ENCODE measurements at regions of chr7 and their contacts with region 1.

Region 1: GRCh38 chr7:134943764-134944400 is 42.4 kb upstream of the AGBL3 start:
- DNase-seq: peak; percentile 19
- ATAC-seq: peak; percentile 93
- H3K4me3 ChIP-seq: no peak overlapping the region
- H3K27ac ChIP-seq: no peak overlapping the region
- H3K4me1 ChIP-seq: no peaks in the 10 kb centered on the region
- H3K27me3 ChIP-seq: no peaks in the 10 kb centered on the region
- CTCF ChIP-seq: peak; percentile 40 to 78 (median 62); a peak in 5 of 6 replicates
- POLR2A ChIP-seq: no peak
- RAD21 ChIP-seq: peak; percentile 83

Region 2: DNA sequence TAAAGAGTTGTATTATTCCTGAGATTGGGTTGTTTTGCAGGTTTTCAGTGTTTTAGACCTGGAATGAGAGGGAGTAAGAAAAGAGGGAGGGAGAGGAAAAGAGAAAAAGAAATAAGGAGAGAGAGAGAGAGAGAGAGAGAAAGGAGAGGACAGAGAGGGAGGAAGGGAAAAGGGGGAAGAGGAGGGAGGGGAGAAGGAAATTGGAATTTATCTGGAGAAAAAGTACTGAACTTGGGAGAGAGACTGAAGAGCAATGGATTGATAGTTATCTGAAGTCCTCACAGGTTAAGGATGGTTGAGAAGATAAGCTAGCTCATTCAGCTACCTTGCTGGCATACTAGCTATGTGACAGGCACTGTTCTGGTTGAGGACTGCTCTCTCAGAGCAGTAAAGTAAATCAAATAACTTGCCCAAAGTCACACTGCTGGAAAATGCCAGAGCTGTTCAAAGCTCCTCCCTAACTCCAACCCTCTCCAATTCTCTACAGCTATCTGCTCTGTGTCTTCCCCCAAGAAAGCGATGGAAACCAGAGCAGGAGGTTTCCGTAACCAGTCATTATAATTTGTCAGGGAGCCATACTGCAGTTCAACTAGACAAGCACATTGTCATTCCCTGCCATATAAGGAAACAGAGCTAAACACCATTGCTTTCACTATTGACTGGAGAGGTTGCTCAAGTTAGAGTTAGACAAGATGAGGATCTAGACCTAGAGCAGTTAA is 153.8 kb before region 1 on chr7:
- CTCF ChIA-PET with region 1: no interaction called
- POLR2A ChIA-PET with region 1: no interaction called
- RAD21 ChIA-PET with region 1: no interaction called
- intact Hi-C with region 1: no loop called
- DNase-seq: no peak
- ATAC-seq: no peak
- H3K4me3 ChIP-seq: no peak overlapping the region
- H3K27ac ChIP-seq: no peak overlapping the region
- H3K4me1 ChIP-seq: no peaks in the 10 kb centered on the region
- H3K27me3 ChIP-seq: no peaks in the 10 kb centered on the region
- CTCF ChIP-seq: no peak
- POLR2A ChIP-seq: no peak
- RAD21 ChIP-seq: no peak

Region 3: GRCh38 chr7:134875867-134876266 is 68.0 kb before region 1 on chr7:
- CTCF ChIA-PET with region 1: interaction called, 3 read pairs
- POLR2A ChIA-PET with region 1: no interaction called
- RAD21 ChIA-PET with region 1: no interaction called
- intact Hi-C with region 1: loop called (anchors 5 kb)
- DNase-seq: no peak
- ATAC-seq: no peak
- H3K4me3 ChIP-seq: no peak overlapping the region
- H3K27ac ChIP-seq: no peak overlapping the region
- H3K4me1 ChIP-seq: peaks cover 0 to 7% of the 10 kb centered on the region in 2 experiments; a peak in 1 of 4 replicates
- H3K27me3 ChIP-seq: no peaks in the 10 kb centered on the region
- CTCF ChIP-seq: no peak
- POLR2A ChIP-seq: no peak
- RAD21 ChIP-seq: no peak

Measured in HCT116 (cell line).